CD4-positive, alpha-beta memory T cell (primary cell): ENCODE measurements at regions of chr2 and their contacts with region 1.

Region 1: GRCh38 chr2:30146438-30147147 is at the start of gene YPEL5:
- DNase-seq: peak; percentile 99 to 100 (median 100)
- H3K4me3 ChIP-seq: peak within 1 kb of the TSS; percentile 49 to 78
- H3K4me3 Mint-ChIP-seq: peak within 1 kb of the TSS; percentile 86 to 94 (median 88)
- H3K27ac ChIP-seq: peak within 1 kb of the TSS; percentile 99
- H3K27ac Mint-ChIP-seq: peak within 1 kb of the TSS; percentile 98 to 100 (median 100)
- H3K4me1 ChIP-seq: peaks cover 54% of the 10 kb centered on the region
- H3K4me1 Mint-ChIP-seq: peaks cover 36 to 73% (median 43%) of the 10 kb centered on the region in 4 donors
- H3K27me3 ChIP-seq: no peaks in the 10 kb centered on the region
- H3K27me3 Mint-ChIP-seq: no peaks in the 10 kb centered on the region
- total RNA-seq, gene YPEL5: 81.5 to 88.4 TPM

Region 2: DNA sequence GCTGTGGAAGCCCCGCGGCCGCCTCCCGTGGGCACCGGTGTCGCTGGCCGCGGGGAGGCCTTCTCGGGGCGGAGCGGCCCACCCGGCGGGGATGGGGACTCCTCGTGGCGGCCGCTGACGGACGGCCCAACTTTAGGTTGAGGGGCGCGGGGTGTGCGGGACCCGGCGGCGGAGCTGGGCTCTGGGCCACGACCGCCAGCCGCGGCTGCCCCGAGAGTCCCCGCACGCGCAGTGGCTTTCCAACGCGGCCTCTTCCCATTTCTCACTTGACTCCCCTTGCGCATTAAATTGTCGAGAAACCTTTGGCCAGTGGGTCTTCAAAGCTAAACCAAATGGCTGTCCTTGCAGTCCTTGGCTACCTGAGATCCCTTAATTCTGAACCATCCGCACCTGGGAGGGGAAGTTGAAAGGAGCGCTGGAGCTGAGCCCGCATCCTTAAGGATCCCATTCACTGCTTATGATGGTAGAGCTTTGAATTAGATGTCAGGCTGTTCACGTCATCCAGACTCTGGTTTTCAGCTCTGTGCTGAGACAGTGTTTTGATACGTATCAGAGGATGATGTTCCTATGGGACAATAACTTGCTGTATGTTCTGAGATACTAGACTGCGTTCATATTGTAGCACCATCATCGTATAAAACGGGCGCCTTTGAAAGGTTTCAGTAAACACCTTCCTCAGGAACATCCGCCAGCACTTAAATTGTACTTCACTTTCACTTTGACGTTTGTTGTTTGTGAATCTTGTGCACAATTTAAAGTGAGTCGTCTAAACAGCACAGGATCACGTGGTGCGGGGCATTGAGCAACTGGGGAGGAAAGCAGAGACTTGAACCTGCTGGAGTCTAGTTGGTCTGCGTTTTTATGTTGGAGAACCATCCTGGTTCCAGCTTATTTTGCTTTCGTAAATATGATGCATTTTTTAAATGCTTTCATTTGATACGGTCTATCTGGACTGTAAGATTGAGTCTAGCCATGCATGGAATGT is 1030.5 kb before region 1 on chr2:
- CTCF ChIA-PET with region 1: no interaction called
- POLR2A ChIA-PET with region 1: no interaction called
- intact Hi-C with region 1: loop called (anchors 10 kb)
- DNase-seq: peak; percentile 74 to 90 (median 78)
- H3K4me3 ChIP-seq: peak overlapping the region; percentile 83 to 88
- H3K4me3 Mint-ChIP-seq: peak overlapping the region; percentile 86 to 97 (median 94)
- H3K27ac ChIP-seq: peak overlapping the region; percentile 78
- H3K27ac Mint-ChIP-seq: peak overlapping the region; percentile 93 to 98 (median 96)
- H3K4me1 ChIP-seq: peaks cover 43% of the 10 kb centered on the region
- H3K4me1 Mint-ChIP-seq: peaks cover 33 to 60% (median 44%) of the 10 kb centered on the region in 4 donors
- H3K27me3 ChIP-seq: no peaks in the 10 kb centered on the region
- H3K27me3 Mint-ChIP-seq: no peaks in the 10 kb centered on the region

Region 3: DNA sequence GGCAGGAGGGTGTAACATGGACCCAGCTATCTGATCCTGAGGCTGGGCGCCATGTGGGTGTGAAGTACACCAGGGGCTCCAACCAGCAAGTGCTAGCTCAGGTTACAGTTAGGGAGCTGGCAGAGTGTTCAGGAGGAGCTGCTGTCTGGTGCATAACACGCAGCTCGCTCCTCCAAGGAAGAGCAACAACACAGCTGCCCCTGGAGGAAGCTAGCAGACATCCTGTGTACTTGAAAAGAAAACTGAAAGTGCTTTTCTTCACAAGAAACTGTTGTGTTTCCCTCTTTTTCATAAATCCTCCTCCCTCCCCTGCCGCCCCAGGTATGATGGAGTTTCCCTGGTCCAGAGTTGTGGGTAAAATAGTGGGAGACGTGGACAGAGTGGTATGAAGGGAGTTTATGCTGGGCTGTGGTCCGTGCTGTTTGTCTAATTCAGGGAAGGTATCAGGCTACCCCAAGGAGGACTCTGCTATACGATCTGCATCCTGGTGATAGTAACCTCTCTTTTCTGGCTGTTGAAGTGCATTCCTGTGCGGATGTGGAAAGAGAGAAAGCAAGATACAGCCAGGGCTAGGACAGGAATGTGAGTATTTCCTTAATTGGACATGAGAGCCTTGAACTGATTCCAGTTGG is 78.7 kb after region 1 on chr2:
- CTCF ChIA-PET with region 1: interaction called, 16 read pairs
- POLR2A ChIA-PET with region 1: interaction called, 134 read pairs
- intact Hi-C with region 1: no loop called
- DNase-seq: peak; percentile 63 to 75 (median 67)
- H3K4me3 ChIP-seq: peak overlapping the region; percentile 54 to 79
- H3K4me3 Mint-ChIP-seq: peak overlapping the region; percentile 88 to 99 (median 94)
- H3K27ac ChIP-seq: peak overlapping the region; percentile 95
- H3K27ac Mint-ChIP-seq: peak overlapping the region; percentile 96 to 100 (median 99)
- H3K4me1 ChIP-seq: peaks cover 75% of the 10 kb centered on the region
- H3K4me1 Mint-ChIP-seq: peaks cover 55 to 84% (median 70%) of the 10 kb centered on the region in 4 donors
- H3K27me3 ChIP-seq: no peaks in the 10 kb centered on the region
- H3K27me3 Mint-ChIP-seq: no peaks in the 10 kb centered on the region

Region 4: GRCh38 chr2:30266051-30266621 is 119.5 kb after region 1 on chr2:
- CTCF ChIA-PET with region 1: interaction called, 4 read pairs
- POLR2A ChIA-PET with region 1: interaction called, 25 read pairs
- intact Hi-C with region 1: loop called (anchors 1 kb)
- DNase-seq: peak; percentile 68 to 89 (median 75)
- H3K4me3 ChIP-seq: peak overlapping the region; percentile 34 to 44
- H3K4me3 Mint-ChIP-seq: peak overlapping the region; percentile 86 to 96 (median 90)
- H3K27ac ChIP-seq: peak overlapping the region; percentile 66
- H3K27ac Mint-ChIP-seq: peak overlapping the region; percentile 92 to 99 (median 98)
- H3K4me1 ChIP-seq: peaks cover 70% of the 10 kb centered on the region
- H3K4me1 Mint-ChIP-seq: peaks cover 46 to 84% (median 72%) of the 10 kb centered on the region in 4 donors
- H3K27me3 ChIP-seq: no peaks in the 10 kb centered on the region
- H3K27me3 Mint-ChIP-seq: no peaks in the 10 kb centered on the region

Region 5: DNA sequence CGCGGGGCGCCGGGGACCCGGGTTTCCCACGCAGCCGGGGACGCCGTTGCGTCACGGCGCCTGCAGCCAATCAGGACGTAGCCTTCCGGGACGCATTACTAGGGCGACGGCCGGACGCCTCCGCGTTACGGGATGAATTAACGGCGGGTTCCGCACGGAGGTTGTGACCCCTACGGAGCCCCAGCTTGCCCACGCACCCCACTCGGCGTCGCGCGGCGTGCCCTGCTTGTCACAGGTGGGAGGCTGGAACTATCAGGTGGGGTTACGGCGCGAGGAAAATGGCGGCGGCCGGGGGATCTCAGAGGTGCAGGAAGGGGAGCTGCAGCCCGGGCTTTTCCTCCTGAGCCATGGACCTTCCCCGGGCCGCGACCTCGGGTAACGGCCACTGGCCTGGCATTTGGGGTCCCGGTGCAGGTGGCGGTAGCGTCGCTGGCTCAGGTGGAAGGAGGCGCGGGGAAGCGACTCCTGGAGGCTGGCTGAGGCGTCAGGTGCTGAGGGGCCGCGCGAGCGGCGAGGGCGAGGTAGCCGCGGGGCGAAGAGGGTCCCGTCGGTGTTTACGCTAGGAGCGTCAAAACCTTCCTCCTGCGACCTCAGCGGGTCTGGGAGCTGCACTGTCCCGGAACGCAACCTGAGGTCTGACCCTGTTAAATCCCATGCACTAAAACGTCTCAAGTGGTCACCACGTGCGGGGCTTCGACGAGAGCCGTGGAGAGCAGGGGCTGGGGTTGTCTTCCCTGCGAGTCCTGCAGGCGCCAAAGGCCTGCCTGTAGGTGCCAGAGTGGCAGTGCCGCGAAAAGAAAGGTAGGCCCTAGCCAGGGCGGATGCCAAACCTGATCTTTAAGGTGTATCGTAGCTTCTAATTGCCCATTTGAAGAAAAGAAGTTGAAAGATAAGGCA is 300.8 kb after region 1 on chr2 and contains the start of gene LCLAT1:
- CTCF ChIA-PET with region 1: no interaction called
- POLR2A ChIA-PET with region 1: interaction called, 7 read pairs
- intact Hi-C with region 1: loop called (anchors 1 kb)
- DNase-seq: peak; percentile 87 to 88 (median 88)
- H3K4me3 ChIP-seq: peak within 1 kb of the TSS; percentile 48 to 96
- H3K4me3 Mint-ChIP-seq: peak within 1 kb of the TSS; percentile 95 to 99 (median 96)
- H3K27ac ChIP-seq: peak within 1 kb of the TSS; percentile 83
- H3K27ac Mint-ChIP-seq: peak within 1 kb of the TSS; percentile 89 to 99 (median 98)
- H3K4me1 ChIP-seq: peaks cover 27% of the 10 kb centered on the region
- H3K4me1 Mint-ChIP-seq: peaks cover 23 to 40% (median 30%) of the 10 kb centered on the region in 4 donors
- H3K27me3 ChIP-seq: no peaks in the 10 kb centered on the region
- H3K27me3 Mint-ChIP-seq: peaks cover 0 to 1% of the 10 kb centered on the region in 2 donors
- total RNA-seq, gene LCLAT1: 11.5 to 14.1 TPM